ENCODE measurements at regions of chr11 and their contacts with region 1.

Region 1: GRCh38 chr11:535519-536454 is at the start of gene HRAS:
- DNase-seq: peak; percentile 93 to 98 (median 96)
- H3K4me3 ChIP-seq: peak within 1 kb of the TSS; percentile 29 to 69
- H3K4me3 Mint-ChIP-seq: peak within 1 kb of the TSS; percentile 90 to 98 (median 96)
- H3K27ac ChIP-seq: peak within 1 kb of the TSS; percentile 65
- H3K27ac Mint-ChIP-seq: peak within 1 kb of the TSS; percentile 92 to 98 (median 97)
- H3K4me1 ChIP-seq: peaks cover 40% of the 10 kb centered on the region
- H3K4me1 Mint-ChIP-seq: peaks cover 4 to 34% (median 16%) of the 10 kb centered on the region in 4 donors
- H3K27me3 ChIP-seq: no peaks in the 10 kb centered on the region
- H3K27me3 Mint-ChIP-seq: no peaks in the 10 kb centered on the region
- total RNA-seq, gene HRAS: 36.7 to 42.5 TPM

Region 2: GRCh38 chr11:506238-506994 is 29.4 kb before region 1 on chr11:
- CTCF ChIA-PET with region 1: no interaction called
- POLR2A ChIA-PET with region 1: interaction called, 47 read pairs
- intact Hi-C with region 1: loop called (anchors 1 kb)
- DNase-seq: peak; percentile 94 to 98 (median 97)
- H3K4me3 ChIP-seq: peak overlapping the region; percentile 91 to 99
- H3K4me3 Mint-ChIP-seq: peak overlapping the region; percentile 95 to 100 (median 98)
- H3K27ac ChIP-seq: peak overlapping the region; percentile 100
- H3K27ac Mint-ChIP-seq: peak overlapping the region; percentile 100
- H3K4me1 ChIP-seq: peaks cover 35% of the 10 kb centered on the region
- H3K4me1 Mint-ChIP-seq: peaks cover 6 to 42% (median 25%) of the 10 kb centered on the region in 4 donors
- H3K27me3 ChIP-seq: no peaks in the 10 kb centered on the region
- H3K27me3 Mint-ChIP-seq: no peaks in the 10 kb centered on the region

Region 3: GRCh38 chr11:554824-555472 is 19.2 kb after region 1 on chr11:
- CTCF ChIA-PET with region 1: interaction called, 11 read pairs
- POLR2A ChIA-PET with region 1: interaction called, 26 read pairs
- intact Hi-C with region 1: loop called (anchors 1 kb)
- DNase-seq: peak; percentile 72 to 77 (median 74)
- H3K4me3 ChIP-seq: peak overlapping the region in 1 of 2 donors; percentile 43
- H3K4me3 Mint-ChIP-seq: peak overlapping the region in 6 of 8 donors; percentile 13 to 68 (median 58)
- H3K27ac ChIP-seq: peak overlapping the region; percentile 21
- H3K27ac Mint-ChIP-seq: peak overlapping the region in 1 of 7 donors; percentile 46
- H3K4me1 ChIP-seq: peaks cover 16% of the 10 kb centered on the region
- H3K4me1 Mint-ChIP-seq: peaks cover 3 to 12% (median 4%) of the 10 kb centered on the region in 4 donors
- H3K27me3 ChIP-seq: no peaks in the 10 kb centered on the region
- H3K27me3 Mint-ChIP-seq: no peaks in the 10 kb centered on the region

Region 4: GRCh38 chr11:568306-569157 is 32.7 kb after region 1 on chr11:
- CTCF ChIA-PET with region 1: no interaction called
- POLR2A ChIA-PET with region 1: interaction called, 17 read pairs
- intact Hi-C with region 1: no loop called
- DNase-seq: peak; percentile 90 to 97 (median 95)
- H3K4me3 ChIP-seq: peak overlapping the region in 1 of 2 donors; percentile 58
- H3K4me3 Mint-ChIP-seq: peak overlapping the region; percentile 70 to 85 (median 76)
- H3K27ac ChIP-seq: peak overlapping the region; percentile 48
- H3K27ac Mint-ChIP-seq: no peak overlapping the region
- H3K4me1 ChIP-seq: peaks cover 15% of the 10 kb centered on the region
- H3K4me1 Mint-ChIP-seq: peaks cover 0 to 6% (median 5%) of the 10 kb centered on the region in 4 donors
- H3K27me3 ChIP-seq: no peaks in the 10 kb centered on the region
- H3K27me3 Mint-ChIP-seq: no peaks in the 10 kb centered on the region

Region 5: GRCh38 chr11:727859-728748 is 192.3 kb after region 1 on chr11:
- CTCF ChIA-PET with region 1: interaction called, 4 read pairs
- POLR2A ChIA-PET with region 1: interaction called, 12 read pairs
- intact Hi-C with region 1: no loop called
- DNase-seq: peak; percentile 71 to 78 (median 75)
- H3K4me3 ChIP-seq: no peak overlapping the region
- H3K4me3 Mint-ChIP-seq: no peak overlapping the region
- H3K27ac ChIP-seq: no peak overlapping the region
- H3K27ac Mint-ChIP-seq: no peak overlapping the region
- H3K4me1 ChIP-seq: peaks cover 26% of the 10 kb centered on the region
- H3K4me1 Mint-ChIP-seq: peaks cover 4 to 13% (median 9%) of the 10 kb centered on the region in 4 donors
- H3K27me3 ChIP-seq: no peaks in the 10 kb centered on the region
- H3K27me3 Mint-ChIP-seq: peaks cover 1 to 2% of the 10 kb centered on the region in 2 donors